Heart left ventricle (tissue), 16 donors: ENCODE measurements at regions of chr10 and their contacts with region 1.

Region 1: DNA sequence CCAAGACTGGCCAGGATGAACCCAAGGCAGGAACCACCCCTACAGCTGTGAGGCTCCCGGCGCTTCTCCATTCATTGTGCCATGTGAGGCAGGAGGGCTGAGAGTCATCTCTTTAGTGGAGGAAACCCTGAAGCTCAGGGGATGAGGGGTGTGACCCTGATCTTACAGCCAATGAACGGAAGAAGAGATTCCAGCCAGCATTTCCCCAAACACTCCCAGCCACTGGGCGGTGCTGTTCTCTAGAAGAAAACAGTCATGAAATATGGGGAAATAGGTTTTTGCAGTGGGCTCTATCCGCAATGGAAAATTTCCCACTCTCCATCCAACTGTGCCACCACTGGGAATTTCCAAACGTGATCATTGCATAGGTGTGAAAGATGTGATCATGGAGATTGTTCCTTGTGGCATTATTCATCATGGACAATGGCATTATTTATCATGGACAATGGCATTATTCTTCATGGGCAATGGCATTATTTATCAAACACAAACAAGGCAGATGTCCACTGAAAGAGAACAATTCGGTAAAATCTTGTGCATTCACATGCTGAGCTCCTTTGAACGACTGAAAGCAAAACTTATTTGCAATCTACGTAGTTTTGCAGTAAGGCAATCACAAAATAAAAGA is 14.0 kb upstream of the SLC18A2 start:
- DNase-seq: no peak
- ATAC-seq: no peak
- H3K4me3 ChIP-seq: no peak overlapping the region
- H3K27ac ChIP-seq: no peak overlapping the region
- H3K4me1 ChIP-seq: no peaks in the 10 kb centered on the region
- H3K27me3 ChIP-seq: peaks cover 0 to 66% (median 12%) of the 10 kb centered on the region in 9 donors
- CTCF ChIP-seq: peak in 1 of 12 donors; percentile 12
- POLR2A ChIP-seq: no peak

Region 2: DNA sequence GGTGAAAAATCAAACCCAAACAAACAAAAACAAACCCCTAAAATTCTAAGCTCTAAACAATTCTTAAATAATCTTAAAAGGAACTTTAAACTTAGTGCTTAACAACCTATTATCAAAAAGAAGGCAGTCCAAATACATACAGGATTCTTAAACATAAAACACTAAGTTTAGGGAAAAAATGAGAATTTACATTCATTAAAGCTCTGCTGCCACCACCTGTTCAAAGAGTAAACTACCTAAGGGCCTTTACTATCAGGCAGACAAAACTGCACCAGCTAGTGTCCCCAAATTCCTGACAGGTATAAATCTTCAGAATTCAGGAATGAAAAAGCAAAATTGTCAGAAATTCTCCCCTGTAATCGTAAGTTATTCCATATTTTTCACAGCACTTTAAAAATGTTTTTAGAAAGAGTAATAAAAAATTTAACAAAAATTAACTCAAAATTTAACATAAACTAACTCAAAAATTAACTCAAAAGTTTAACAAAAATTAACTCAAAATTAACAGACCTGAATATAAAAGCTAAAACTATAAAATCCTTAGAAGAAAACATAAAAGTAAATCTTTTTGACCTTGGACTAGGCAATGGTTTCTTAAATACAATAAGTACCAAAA is 93.2 kb after region 1 on chr10:
- intact Hi-C with region 1: loop called in 1 of 10 experiments (anchors 10 kb)
- DNase-seq: no peak
- ATAC-seq: no peak
- H3K4me3 ChIP-seq: no peak overlapping the region
- H3K27ac ChIP-seq: no peak overlapping the region
- H3K4me1 ChIP-seq: peaks cover 0 to 5% (median 0%) of the 10 kb centered on the region in 12 donors
- H3K27me3 ChIP-seq: no peaks in the 10 kb centered on the region
- CTCF ChIP-seq: peak in 11 of 12 donors; percentile 17 to 61 (median 46)
- POLR2A ChIP-seq: no peak

Region 3: GRCh38 chr10:117442944-117443685 is 216.2 kb after region 1 on chr10:
- intact Hi-C with region 1: loop called in 1 of 10 experiments (anchors 10 kb)
- DNase-seq: peak; percentile 68 to 81 (median 72)
- ATAC-seq: peak; percentile 68 to 86 (median 78)
- H3K4me3 ChIP-seq: peak overlapping the region in 7 of 12 donors; percentile 4 to 39 (median 30)
- H3K27ac ChIP-seq: peak overlapping the region in 1 of 12 donors; percentile 51
- H3K4me1 ChIP-seq: peaks cover 0 to 15% (median 0%) of the 10 kb centered on the region in 12 donors
- H3K27me3 ChIP-seq: peaks cover 0 to 17% (median 0%) of the 10 kb centered on the region in 9 donors
- CTCF ChIP-seq: peak; percentile 72 to 91 (median 84)
- POLR2A ChIP-seq: no peak